Mammary epithelial cell (primary cell): ENCODE measurements at regions of chr9 and their contacts with region 1.

Region 1: DNA sequence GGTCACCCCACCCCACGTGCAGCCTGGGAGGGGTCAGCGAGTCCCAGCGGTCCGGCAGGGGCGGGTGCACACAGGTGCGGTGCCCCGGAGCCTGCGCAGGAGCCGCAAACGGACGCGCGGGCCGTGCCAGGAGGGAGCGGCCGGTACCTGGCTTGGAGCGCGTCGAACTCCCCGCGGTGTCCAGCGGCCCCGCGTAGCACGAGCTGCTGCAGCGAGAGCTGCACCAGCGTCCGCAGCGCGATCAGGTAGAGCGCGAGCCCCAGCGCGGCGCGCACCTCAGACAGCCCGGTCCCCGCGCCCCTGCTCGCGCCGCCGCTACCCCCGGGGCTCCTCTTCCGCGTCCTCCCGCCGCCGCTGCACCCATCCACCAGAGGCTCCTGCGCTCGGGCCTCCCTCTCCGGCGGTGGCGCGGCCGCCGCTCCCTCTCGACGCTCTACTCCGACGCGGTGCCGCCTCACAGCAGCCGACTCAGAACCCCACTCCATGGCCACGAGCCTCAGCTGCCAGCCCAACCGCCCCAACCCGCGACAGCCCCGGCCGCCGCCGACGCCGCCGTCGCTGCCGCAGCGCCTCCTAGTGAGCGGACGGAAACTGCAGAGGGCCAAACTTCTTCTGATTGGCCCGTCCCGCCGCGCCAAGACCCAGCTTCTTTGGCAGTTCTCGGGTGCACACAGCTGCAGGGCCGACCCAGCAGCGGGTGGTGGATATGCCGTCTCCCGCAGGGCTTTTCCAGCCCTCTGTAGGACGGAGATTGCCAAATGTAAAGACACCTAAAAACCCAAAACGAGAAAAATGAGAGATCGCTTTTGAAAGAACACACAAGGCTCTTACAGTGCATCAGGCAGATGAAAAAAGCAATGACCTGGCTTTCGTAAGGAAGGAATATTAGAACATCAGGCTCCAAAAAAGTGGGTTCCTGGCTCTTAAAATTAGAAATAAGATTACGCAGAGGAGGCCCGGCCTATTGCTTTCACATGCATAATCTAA is at the start of gene ERMP1:
- DNase-seq: peak; percentile 81
- H3K4me3 ChIP-seq: peak within 1 kb of the TSS; percentile 95 to 98 (median 97)
- H3K27ac ChIP-seq: peak within 1 kb of the TSS; percentile 41
- H3K4me1 ChIP-seq: peaks cover 14% of the 10 kb centered on the region
- H3K27me3 ChIP-seq: no peaks in the 10 kb centered on the region
- CTCF ChIP-seq: peak; percentile 72 to 86
- total RNA-seq, gene ERMP1: 33.0 to 40.9 TPM

Region 2: GRCh38 chr9:5671711-5672353 is 161.0 kb before region 1 on chr9:
- CTCF ChIA-PET with region 1: no interaction called
- dilution Hi-C with region 1: no loop called
- in situ Hi-C with region 1: no loop called
- intact Hi-C with region 1: no loop called
- DNase-seq: peak; percentile 12
- H3K4me3 ChIP-seq: no peak overlapping the region
- H3K27ac ChIP-seq: no peak overlapping the region
- H3K4me1 ChIP-seq: peaks cover 3% of the 10 kb centered on the region
- H3K27me3 ChIP-seq: no peaks in the 10 kb centered on the region
- CTCF ChIP-seq: no peak

Region 3: GRCh38 chr9:5764130-5764868 is 68.5 kb before region 1 on chr9:
- CTCF ChIA-PET with region 1: no interaction called
- dilution Hi-C with region 1: no loop called
- in situ Hi-C with region 1: no loop called
- intact Hi-C with region 1: no loop called
- DNase-seq: no peak
- H3K4me3 ChIP-seq: no peak overlapping the region
- H3K27ac ChIP-seq: no peak overlapping the region
- H3K4me1 ChIP-seq: no peaks in the 10 kb centered on the region
- H3K27me3 ChIP-seq: no peaks in the 10 kb centered on the region
- CTCF ChIP-seq: no peak

Region 4: DNA sequence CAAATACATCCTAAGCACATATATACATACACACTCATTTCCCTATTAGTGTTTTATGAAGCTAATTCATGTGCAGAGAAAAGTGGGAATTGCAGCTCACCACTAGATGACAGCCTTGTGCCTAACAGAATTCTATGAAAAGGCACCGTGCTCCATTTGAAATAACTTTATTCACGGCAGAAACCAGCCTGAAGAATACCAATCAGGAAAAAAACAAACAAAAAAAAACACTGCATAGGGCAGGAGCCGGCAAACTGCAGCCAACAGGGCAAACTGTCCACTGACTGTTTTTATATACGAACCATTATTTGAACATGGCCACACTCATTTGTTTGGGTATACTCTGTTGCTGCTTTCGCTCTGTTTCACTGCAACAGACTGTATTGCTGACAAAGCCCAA is 33.5 kb before region 1 on chr9:
- CTCF ChIA-PET with region 1: no interaction called
- dilution Hi-C with region 1: no loop called
- in situ Hi-C with region 1: no loop called
- intact Hi-C with region 1: loop called (anchors 1 kb)
- DNase-seq: peak; percentile 42
- H3K4me3 ChIP-seq: no peak overlapping the region
- H3K27ac ChIP-seq: no peak overlapping the region
- H3K4me1 ChIP-seq: no peaks in the 10 kb centered on the region
- H3K27me3 ChIP-seq: no peaks in the 10 kb centered on the region
- CTCF ChIP-seq: peak; percentile 87 to 93

Region 5: DNA sequence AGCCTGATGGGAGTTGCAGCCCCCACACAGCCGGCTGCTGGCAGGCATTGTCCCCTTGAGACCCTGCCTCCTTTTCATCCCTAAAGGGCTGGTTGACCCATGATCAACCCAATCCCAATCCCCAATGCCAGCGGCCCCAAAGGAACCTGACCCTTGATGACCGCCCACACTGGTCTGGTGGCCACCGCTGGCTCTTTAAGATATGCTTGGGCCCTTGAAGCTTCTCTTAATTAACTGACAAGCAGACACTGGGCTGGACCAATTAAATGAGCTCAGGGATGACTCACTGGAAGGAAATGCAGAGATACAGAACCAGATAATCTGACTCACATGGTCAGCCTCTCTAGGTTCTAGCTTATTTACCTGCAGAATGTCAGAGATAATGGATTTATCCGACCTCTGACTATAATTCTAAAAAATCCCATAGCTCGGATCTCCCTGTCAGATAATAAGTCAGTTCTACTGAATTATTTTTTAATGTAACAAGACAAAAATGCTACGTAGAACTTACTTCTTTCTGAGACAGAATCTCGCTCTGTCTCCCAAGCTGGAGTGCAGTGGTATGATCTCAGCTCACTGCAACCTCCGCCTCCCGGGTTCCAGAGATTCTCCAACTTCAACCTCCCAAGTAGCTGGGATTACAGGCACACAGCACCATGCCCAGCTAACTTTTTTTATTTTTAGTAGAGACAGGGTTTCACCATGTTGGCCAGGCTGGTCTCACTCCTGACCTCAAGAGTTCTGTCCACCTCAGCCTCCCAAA is 46.8 kb after region 1 on chr9:
- CTCF ChIA-PET with region 1: no interaction called
- dilution Hi-C with region 1: no loop called
- in situ Hi-C with region 1: no loop called
- intact Hi-C with region 1: loop called (anchors 2 kb)
- DNase-seq: peak; percentile 89
- H3K4me3 ChIP-seq: peak overlapping the region; percentile 28 to 54 (median 44)
- H3K27ac ChIP-seq: peak overlapping the region; percentile 49
- H3K4me1 ChIP-seq: peaks cover 17% of the 10 kb centered on the region
- H3K27me3 ChIP-seq: no peaks in the 10 kb centered on the region
- CTCF ChIP-seq: no peak

Region 6: DNA sequence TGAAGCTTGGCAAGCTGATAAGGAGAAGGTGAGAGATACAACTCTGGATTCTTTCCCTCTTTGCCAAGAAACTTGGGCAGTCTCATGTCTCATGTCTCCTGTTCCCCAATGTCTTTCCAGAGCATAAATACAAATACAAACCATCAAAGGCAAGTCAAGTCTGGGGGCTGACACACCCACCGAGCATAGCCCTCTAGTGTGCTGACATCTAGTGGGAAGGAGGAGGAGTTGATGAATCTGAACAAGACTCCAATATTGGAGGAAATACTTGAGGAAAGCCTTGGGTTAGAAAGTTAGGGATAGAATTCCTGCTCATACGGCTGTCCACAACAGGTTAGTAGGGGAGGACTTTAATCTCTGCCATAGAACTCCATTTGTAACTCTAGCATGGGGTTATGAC is 66.5 kb after region 1 on chr9:
- CTCF ChIA-PET with region 1: no interaction called
- dilution Hi-C with region 1: loop called (anchors 5 kb)
- in situ Hi-C with region 1: no loop called
- intact Hi-C with region 1: no loop called
- DNase-seq: no peak
- H3K4me3 ChIP-seq: no peak overlapping the region
- H3K27ac ChIP-seq: no peak overlapping the region
- H3K4me1 ChIP-seq: no peaks in the 10 kb centered on the region
- H3K27me3 ChIP-seq: no peaks in the 10 kb centered on the region
- CTCF ChIP-seq: peak in 1 of 2 donors; percentile 19

Region 7: DNA sequence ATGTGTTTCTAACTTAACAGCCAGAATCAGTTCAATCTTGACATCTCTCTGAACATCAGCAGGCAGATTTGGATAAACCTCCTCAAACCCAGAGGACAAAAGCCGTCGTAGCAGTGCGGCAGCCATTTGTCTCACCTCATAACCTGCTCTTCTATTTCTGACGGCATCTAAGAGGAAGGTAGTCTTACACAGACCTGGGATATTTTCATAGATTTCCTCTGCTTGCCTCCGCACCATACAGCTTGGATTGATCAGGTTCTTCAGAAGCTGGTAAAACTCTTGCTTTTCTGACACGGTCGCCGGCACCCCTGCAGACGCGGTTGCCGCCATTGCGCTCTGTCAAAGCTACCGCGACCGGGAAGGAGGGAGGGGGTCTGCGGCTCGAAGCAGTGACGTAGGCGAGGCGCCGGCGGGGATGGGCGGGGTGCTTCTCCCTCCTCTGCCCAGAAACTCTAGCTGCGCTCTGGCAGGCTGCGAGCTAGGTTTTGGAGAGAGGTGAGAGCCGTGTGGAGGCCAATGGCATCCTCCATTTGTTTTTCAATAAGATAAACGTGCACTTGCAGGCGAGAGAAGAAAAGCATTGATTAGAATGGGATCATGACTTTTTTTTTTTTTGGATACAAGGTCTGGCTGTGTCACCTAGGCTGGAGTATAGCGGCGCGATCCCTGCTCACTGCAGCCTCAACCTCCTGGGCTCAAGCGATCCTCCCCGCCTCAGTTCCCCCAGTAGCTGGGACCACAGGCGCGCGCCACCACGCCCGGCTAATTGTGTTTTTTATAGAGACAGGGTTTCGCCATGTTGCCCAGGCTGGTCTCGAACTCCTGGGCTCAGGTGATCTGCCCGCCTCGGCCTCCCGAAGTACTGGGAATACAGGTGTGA is 182.7 kb after region 1 on chr9 and contains the start of gene RANBP6:
- CTCF ChIA-PET with region 1: no interaction called
- dilution Hi-C with region 1: loop called (anchors 5 kb)
- in situ Hi-C with region 1: no loop called
- intact Hi-C with region 1: no loop called
- DNase-seq: peak; percentile 80
- H3K4me3 ChIP-seq: peak within 1 kb of the TSS; percentile 62 to 90 (median 65)
- H3K27ac ChIP-seq: peak within 1 kb of the TSS; percentile 82
- H3K4me1 ChIP-seq: peaks cover 13% of the 10 kb centered on the region
- H3K27me3 ChIP-seq: no peaks in the 10 kb centered on the region
- CTCF ChIP-seq: no peak
- total RNA-seq, gene RANBP6: 13.4 to 23.3 TPM